Activated CD8-positive, alpha-beta T cell treated with anti-CD3 and anti-CD28 coated beads for 36 hours (primary cell): ENCODE measurements at regions of chr1 and their contacts with region 1.

Region 1: GRCh38 chr1:161382214-161383019 is 14.7 kb upstream of the CFAP126 start:
- DNase-seq: no peak
- ATAC-seq: peak; percentile 87
- H3K4me3 Mint-ChIP-seq: no peak overlapping the region
- H3K27ac Mint-ChIP-seq: no peak overlapping the region
- H3K4me1 Mint-ChIP-seq: peaks cover 16% of the 10 kb centered on the region
- H3K27me3 Mint-ChIP-seq: no peaks in the 10 kb centered on the region
- CTCF ChIP-seq: peak; percentile 84

Region 2: DNA sequence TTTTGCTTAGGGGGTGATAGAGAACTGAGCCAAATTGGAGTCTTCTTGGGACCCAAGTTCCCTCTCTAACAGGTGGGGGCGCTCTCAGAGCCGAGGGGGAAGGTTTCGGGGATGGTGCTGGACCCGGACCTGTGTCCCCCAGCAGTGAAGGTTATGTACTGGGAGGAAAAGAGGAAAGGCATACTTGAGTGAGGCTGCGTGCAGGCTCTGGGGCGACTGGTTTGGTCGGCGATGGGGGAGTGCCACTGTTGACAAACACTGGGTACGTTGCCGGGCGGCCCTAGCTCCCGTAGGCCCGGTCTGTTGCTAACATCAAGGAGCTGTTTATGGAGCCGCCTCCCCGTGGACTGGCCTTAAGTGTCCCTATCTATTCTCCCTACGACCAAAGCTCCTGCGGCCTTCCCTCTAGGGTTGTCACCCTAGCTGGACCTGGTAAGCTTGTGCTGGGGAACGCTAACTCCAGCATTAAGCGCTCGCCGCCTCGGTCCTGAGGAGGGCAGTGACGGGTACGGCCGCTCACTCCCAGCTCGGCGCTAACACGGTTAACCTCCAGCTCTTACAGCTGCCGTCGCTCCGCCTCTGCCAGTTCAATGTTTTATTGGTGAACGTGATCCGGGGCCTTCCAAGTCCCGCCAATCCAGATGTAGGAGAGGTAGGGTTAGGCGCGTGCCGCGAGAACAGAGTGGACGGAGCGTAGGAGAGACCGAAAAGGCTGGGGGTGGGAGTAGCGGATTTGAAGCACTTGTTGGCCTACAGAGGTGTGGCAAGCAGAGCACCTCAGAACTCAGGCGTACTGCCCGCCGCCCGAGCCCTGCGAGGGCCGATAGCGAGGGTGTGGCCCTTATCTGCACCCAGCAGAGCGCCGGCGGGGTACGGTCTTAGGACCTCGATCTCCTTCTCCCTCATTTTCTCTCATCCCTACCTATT is 216.4 kb before region 1 on chr1 and contains the start of gene PPOX:
- CTCF ChIA-PET with region 1: interaction called, 17 read pairs
- POLR2A ChIA-PET with region 1: no interaction called
- intact Hi-C with region 1: no loop called
- DNase-seq: peak; percentile 97
- ATAC-seq: peak; percentile 94
- H3K4me3 Mint-ChIP-seq: peak within 1 kb of the TSS; percentile 82
- H3K27ac Mint-ChIP-seq: peak within 1 kb of the TSS; percentile 95
- H3K4me1 Mint-ChIP-seq: peaks cover 46% of the 10 kb centered on the region
- H3K27me3 Mint-ChIP-seq: no peaks in the 10 kb centered on the region
- CTCF ChIP-seq: peak; percentile 69
- total RNA-seq, gene PPOX: 24.4 to 24.9 TPM

Region 3: DNA sequence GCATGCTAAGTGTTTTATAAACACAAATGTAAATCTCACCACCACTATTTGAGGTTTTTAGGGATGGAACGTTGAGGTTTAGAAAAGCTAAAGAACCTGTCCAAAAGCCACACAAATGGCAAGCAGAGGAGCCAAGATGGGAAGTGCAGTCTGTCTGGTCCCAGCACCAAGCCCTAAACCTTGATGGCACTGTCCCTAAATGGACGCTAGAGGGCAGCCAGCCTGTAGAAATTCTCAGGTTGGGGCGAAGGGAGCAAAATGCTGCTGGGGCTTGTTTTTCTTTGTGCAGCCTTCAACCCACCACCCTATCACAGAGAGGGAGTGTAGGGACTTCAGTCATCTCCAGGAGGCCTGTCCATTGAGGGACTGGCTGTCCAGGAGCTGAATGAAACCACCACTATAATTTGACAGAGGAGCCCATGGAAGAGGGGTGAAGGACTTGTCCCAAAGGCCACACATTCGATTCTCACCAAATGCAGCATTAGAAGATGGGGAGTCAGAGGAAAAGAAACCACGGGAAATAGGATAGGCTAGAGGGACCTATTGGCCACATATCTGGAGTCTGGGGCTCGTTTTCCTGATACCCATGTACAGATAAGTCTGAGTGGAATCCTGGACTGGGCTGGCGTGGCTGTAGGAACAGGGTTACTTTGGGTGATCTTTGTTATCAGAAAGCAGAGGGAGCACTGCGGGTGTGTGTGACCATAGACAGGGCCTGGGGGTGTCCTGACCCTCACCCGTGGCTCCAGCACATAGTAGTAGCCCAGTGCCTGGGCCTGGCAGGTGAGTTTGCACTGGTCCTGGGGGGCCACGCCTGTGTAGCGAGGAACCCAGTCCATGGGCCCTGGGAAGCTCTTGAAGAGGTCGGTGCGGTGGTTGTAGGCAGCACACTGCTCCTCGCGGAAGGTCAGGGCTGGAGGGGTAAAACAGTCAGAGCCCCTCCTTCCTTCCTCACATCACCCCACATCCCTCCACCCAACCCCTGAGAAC is 189.6 kb before region 1 on chr1:
- CTCF ChIA-PET with region 1: interaction called, 52 read pairs
- POLR2A ChIA-PET with region 1: no interaction called
- intact Hi-C with region 1: no loop called
- DNase-seq: peak; percentile 81
- ATAC-seq: peak; percentile 95
- H3K4me3 Mint-ChIP-seq: no peak overlapping the region
- H3K27ac Mint-ChIP-seq: peak overlapping the region; percentile 78
- H3K4me1 Mint-ChIP-seq: peaks cover 23% of the 10 kb centered on the region
- H3K27me3 Mint-ChIP-seq: no peaks in the 10 kb centered on the region
- CTCF ChIP-seq: peak; percentile 92

Region 4: DNA sequence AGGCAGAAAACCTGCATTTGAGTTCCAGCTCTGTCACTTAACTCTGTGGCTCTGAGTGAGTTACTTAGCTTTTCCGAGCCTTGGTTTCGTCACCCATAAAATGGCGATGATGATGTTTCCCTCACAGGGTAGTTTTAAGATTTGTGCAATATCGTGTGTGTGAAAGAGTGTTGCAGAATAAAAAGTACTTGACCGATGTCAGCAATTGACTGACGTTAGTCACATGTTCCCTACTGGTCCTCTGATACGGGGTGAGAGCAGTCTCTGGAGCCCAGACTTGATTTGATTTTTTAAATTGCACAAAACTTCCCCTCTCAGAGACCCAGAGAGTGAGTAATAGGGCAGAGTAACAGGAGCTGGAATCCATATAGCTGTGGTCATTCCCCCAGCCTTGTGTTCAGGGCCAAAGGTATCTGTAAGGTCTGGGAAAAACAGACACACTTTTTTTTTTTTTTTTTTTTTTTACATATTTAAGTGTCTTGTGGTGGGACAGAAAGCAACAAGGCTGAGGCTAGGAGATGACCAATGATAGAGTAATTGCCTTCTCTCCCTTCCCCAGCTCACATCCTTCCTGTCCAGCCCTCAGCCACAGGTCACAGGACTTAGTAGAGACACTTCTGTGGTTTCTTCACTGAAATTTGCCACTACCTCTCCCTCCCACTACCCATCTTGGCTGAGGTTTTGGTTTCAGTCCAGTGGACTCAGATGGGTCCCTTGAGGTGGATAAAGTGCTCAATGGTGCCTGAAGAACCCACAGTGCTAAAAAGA is 165.3 kb before region 1 on chr1:
- CTCF ChIA-PET with region 1: interaction called, 28 read pairs
- POLR2A ChIA-PET with region 1: no interaction called
- intact Hi-C with region 1: no loop called
- DNase-seq: no peak
- ATAC-seq: peak; percentile 70
- H3K4me3 Mint-ChIP-seq: no peak overlapping the region
- H3K27ac Mint-ChIP-seq: peak overlapping the region; percentile 76
- H3K4me1 Mint-ChIP-seq: peaks cover 54% of the 10 kb centered on the region
- H3K27me3 Mint-ChIP-seq: no peaks in the 10 kb centered on the region
- CTCF ChIP-seq: no peak

Region 5: DNA sequence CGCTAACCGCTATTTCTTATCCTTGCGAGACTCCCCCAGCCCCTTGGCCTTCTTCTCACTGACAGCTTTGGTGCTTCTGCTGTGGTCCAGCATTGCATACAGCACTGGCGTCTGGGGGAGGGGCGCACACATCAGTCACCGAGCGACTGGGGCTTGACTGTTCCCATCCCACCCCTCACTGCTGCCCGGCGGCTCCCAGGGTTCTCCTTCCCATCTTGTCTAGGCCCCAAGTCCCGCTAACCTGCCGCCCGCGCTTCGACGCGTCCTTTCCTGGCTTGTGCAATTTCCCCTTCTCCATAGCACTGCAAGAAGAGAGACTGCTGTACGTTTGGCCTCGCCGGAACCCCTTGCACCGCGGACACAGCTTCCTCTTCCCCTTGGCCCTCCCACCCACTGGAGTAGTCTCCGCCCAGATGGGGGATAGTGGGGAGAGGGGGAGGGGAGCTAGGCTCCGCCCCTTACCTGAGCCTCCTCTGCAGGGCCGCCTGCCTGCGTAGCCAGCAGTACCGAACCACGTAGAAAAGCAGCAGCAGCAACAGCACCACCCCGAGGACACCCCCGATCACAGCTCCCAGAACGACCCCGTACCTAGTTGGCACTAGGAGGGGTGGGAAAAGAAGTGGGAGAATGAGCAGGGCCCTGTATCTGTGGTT is 76.4 kb before region 1 on chr1:
- CTCF ChIA-PET with region 1: interaction called, 11 read pairs
- POLR2A ChIA-PET with region 1: no interaction called
- intact Hi-C with region 1: no loop called
- DNase-seq: peak; percentile 90
- ATAC-seq: peak; percentile 99
- H3K4me3 Mint-ChIP-seq: peak overlapping the region; percentile 87
- H3K27ac Mint-ChIP-seq: peak overlapping the region; percentile 84
- H3K4me1 Mint-ChIP-seq: peaks cover 31% of the 10 kb centered on the region
- H3K27me3 Mint-ChIP-seq: no peaks in the 10 kb centered on the region
- CTCF ChIP-seq: peak; percentile 53

Region 6: DNA sequence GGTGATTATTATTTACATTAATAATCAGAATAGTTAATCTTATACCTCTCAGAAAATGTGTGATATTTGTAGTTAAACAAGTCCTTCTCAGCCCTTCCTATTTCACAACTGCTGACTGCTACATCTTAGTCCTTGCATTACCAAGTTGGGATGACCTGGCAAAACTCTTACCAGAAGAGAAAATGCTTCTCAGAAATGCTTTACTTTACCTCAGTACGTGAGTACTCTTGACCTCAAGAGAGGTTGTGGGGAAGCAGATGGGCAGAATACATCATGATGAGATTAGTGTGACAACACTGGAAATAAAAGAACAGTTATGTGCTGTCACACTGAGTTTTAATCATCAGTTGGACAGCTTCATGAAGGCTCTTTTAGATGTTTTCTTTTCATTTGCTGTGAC is 30.9 kb before region 1 on chr1:
- CTCF ChIA-PET with region 1: interaction called, 27 read pairs
- POLR2A ChIA-PET with region 1: no interaction called
- intact Hi-C with region 1: no loop called
- DNase-seq: no peak
- ATAC-seq: no peak
- H3K4me3 Mint-ChIP-seq: no peak overlapping the region
- H3K27ac Mint-ChIP-seq: peak overlapping the region; percentile 42
- H3K4me1 Mint-ChIP-seq: peaks cover 7% of the 10 kb centered on the region
- H3K27me3 Mint-ChIP-seq: no peaks in the 10 kb centered on the region
- CTCF ChIP-seq: no peak

Region 7: GRCh38 chr1:161367684-161368400 is 14.6 kb before region 1 on chr1 and contains the start of gene CFAP126:
- CTCF ChIA-PET with region 1: interaction called, 20 read pairs
- POLR2A ChIA-PET with region 1: interaction called, 3 read pairs
- intact Hi-C with region 1: no loop called
- DNase-seq: peak; percentile 66
- ATAC-seq: peak; percentile 99
- H3K4me3 Mint-ChIP-seq: no peak within 1 kb of the TSS
- H3K27ac Mint-ChIP-seq: peak within 1 kb of the TSS; percentile 50
- H3K4me1 Mint-ChIP-seq: peaks cover 17% of the 10 kb centered on the region
- H3K27me3 Mint-ChIP-seq: no peaks in the 10 kb centered on the region
- CTCF ChIP-seq: peak; percentile 33
- total RNA-seq, gene CFAP126: not detected

Region 8: GRCh38 chr1:161549652-161550051 is 167.2 kb after region 1 on chr1 and contains the start of gene FCGR3A:
- CTCF ChIA-PET with region 1: no interaction called
- POLR2A ChIA-PET with region 1: no interaction called
- intact Hi-C with region 1: no loop called
- DNase-seq: no peak
- ATAC-seq: no peak
- H3K4me3 Mint-ChIP-seq: no peak within 1 kb of the TSS
- H3K27ac Mint-ChIP-seq: no peak within 1 kb of the TSS
- H3K4me1 Mint-ChIP-seq: peaks cover 18% of the 10 kb centered on the region
- H3K27me3 Mint-ChIP-seq: no peaks in the 10 kb centered on the region
- CTCF ChIP-seq: no peak
- total RNA-seq, gene FCGR3A: 0.27 to 0.36 TPM